ENCODE measurements at regions of chr5 and their contacts with region 1.

Region 1: DNA sequence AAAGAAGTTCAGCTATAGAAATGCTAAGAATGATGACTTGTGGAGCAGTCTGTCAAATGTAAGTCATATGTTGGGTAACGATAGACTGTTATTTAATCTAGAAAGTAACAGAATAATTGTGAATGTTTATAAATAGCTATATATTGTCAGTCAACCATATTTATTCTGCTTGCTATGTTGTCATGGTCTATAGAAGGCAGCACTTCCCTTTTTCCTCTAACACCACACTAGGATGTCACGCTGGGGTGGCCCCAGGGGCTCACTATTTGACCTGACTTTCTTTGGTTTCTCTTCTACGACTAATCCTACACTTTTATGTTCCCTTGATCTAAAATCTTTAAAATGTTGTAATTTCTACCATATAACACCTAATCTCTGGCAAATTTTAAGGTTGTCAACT is 20.5 kb downstream of the ERAP2 start:
- DNase-seq: peak; percentile 62
- H3K4me3 Mint-ChIP-seq: peak overlapping the region; percentile 79
- H3K27ac Mint-ChIP-seq: peak overlapping the region; percentile 93
- H3K4me1 Mint-ChIP-seq: peaks cover 48% of the 10 kb centered on the region
- H3K27me3 Mint-ChIP-seq: no peaks in the 10 kb centered on the region

Region 2: DNA sequence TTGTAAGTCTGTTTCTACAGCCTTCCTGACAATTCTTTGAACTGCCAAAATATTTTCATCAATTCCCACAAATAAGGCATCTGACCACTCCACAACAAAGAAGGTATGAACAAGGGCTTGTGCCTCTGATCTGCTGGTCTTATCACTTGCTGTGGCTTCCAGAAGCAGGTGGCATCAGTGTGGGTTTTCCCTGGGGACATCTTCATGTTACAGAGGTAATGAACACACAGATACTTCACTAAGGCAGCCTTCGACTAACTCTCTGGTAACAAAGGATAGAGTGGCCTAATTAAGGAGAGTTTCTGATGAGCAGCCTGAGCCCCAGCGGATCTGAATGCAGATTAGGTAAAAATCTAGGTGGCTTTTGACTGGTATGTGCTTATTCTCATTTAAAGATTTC is 35.7 kb before region 1 on chr5:
- CTCF ChIA-PET with region 1: interaction called, 5 read pairs
- POLR2A ChIA-PET with region 1: interaction called, 3 read pairs
- intact Hi-C with region 1: loop called (anchors 5 kb)
- DNase-seq: no peak
- H3K4me3 Mint-ChIP-seq: no peak overlapping the region
- H3K27ac Mint-ChIP-seq: no peak overlapping the region
- H3K4me1 Mint-ChIP-seq: peaks cover 19% of the 10 kb centered on the region
- H3K27me3 Mint-ChIP-seq: no peaks in the 10 kb centered on the region

Region 3: DNA sequence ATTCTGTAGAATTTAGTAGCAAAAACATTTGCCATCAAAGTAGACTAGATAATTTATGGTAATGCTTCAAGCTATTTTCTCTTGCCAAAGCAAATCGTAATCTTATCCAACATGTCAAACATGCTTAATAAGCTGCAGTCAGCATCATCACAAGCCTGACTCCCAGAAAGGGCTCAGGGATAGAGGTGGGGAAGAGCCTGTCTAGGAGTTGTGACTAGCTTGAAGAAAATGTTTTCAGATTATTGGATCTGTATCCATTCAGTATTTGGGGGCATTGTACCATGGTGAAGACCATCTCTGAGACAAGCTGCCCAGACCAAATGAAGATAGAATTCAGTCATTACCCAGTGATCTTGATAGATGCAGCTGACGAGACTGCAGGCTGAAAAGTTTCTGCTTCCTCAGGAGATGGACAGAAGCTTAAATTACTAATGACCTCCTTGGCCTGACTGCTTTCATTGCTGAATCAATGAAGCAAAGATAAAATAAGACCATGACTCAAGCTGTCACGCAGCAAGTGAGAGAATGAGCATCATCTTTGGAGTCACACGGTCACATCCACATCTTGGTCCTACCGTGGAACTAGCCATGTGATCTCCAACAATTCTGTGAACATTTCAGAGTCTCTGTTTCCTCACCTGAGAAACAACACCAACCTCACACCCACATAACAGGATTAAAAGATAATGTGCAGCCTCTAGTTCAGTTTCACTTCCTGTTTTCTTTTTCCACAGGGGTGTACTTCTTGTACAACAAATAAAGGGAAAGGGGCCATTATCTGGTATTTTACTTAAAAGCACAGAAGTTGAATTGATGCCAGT is 11.1 kb before region 1 on chr5:
- CTCF ChIA-PET with region 1: interaction called, 5 read pairs
- POLR2A ChIA-PET with region 1: interaction called, 8 read pairs
- intact Hi-C with region 1: loop called (anchors 1 kb)
- DNase-seq: peak; percentile 50
- H3K4me3 Mint-ChIP-seq: peak overlapping the region; percentile 35
- H3K27ac Mint-ChIP-seq: peak overlapping the region; percentile 87
- H3K4me1 Mint-ChIP-seq: peaks cover 57% of the 10 kb centered on the region
- H3K27me3 Mint-ChIP-seq: no peaks in the 10 kb centered on the region

Region 4: DNA sequence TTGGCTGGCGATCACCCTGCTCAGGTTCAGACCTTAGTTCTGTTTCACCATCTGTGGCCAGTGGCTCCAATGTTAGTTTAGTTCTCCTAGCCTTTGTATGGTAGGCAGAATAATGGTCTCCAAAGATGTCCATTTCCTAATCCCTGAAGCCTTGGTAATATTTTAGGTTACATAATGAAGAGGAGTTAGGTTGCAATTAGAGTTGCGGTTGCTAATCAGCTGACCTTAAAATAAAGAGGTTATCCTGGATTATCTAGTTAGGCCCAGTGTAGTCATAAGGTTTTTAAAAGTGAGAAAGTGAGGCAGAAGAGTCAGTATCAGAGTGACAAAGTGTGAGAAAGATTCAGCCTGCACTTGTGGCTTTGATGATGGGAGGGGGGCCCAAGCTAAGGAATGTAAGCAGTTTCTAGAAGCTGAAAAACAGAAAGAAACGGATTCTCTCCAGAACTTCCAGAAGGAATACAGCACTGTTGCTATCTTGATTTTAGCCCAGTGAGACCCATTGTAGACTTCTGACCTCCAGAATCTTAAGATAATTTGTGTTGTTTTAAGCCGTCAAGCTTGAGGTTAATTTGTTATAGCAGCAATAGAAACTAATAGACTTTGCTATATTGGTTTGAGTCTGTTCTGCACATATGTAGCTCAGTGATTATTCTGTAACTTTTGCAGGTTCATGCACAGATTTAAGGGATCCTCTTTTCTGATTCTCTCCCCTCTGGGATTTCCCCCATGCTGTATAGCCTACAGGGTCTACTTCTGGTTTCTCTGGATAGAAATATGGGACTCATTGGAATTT is 60.6 kb after region 1 on chr5:
- CTCF ChIA-PET with region 1: no interaction called
- POLR2A ChIA-PET with region 1: interaction called, 4 read pairs
- intact Hi-C with region 1: loop called (anchors 1 kb)
- DNase-seq: peak; percentile 72
- H3K4me3 Mint-ChIP-seq: peak overlapping the region; percentile 61
- H3K27ac Mint-ChIP-seq: peak overlapping the region; percentile 74
- H3K4me1 Mint-ChIP-seq: peaks cover 79% of the 10 kb centered on the region
- H3K27me3 Mint-ChIP-seq: no peaks in the 10 kb centered on the region

Measured in activated CD4-positive, alpha-beta memory T cell treated with anti-CD3 and anti-CD28 coated beads for 36 hours (primary cell).